Heart right ventricle (tissue), 16 donors: ENCODE measurements at regions of chr18 and their contacts with region 1.

Region 1: DNA sequence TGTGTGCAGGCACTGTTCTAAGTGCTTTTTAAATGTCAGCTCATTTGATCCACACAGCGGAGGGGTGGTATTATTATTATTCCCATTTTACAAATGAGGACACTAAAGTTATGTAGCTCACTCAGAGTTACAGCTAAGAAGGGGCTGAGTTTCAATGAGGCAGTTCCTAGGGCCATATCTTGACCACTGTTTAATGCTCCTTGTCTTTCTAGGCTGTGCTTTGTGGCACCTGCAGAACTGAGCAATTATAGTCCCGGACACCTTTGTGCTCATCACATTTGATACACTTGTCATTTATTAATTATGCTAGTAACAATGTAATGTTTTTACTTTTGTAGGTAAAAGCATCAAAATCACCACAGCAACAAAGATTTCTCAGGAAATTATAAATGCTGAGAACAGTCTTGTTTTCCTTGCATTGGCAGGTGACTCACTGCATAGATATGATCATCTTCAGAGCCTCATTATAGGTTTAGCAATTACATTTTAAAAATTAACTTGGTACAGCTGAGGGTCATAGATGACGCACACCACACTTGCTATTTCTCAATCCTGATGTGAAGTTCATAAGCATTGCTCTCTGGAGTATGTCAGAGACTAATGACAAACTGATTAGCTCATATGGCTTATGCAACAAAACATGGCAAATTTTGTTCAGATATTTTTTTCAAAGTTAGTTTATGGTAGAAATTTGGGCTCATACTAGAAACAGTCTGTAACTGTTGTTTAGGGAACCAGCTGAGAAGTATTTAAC is 366.8 kb downstream of the TGIF1 start:
- DNase-seq: no peak
- ATAC-seq: peak in 1 of 8 donors; percentile 81
- H3K4me3 ChIP-seq: no peak overlapping the region
- H3K27ac ChIP-seq: no peak overlapping the region
- H3K4me1 ChIP-seq: peaks cover 0 to 4% (median 0%) of the 10 kb centered on the region in 9 donors
- H3K27me3 ChIP-seq: no peaks in the 10 kb centered on the region
- CTCF ChIP-seq: no peak

Region 2: DNA sequence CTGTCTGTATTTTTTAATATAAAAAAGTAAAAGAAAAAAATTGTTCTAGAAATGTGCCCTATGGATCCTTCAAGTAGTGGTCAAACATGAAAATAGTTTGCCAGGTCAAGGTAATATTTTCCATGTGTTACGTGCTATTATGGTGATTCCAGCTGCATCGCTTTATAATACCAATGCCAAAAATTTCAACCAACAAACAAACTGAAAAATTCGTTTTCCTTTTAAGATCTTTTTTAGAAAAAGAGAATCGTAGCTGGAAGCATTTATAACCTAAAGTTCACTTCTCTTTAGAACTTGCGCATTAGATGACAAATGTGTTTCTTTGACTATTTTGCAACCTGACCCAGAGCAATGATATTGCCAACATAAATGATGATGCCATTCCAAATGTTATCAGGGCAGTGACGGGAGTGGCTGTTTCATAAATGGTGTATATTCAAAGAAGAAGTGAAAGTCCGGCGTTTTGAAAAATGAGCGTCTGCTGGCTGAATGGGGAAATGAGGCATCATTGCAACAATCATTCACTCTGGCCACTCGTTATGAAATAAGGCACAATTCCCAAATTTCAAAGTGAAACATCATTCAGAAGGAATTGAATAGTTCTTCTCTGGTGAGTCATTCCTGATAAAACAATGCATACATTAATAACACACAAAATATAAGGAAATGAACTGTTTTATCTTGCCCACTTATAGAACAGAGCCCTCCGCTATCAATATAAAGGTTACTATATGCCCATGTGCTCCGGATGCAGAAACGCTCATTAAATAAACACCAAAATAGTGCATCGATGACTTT is 69.4 kb before region 1 on chr18:
- intact Hi-C with region 1: loop called in 1 of 10 experiments (anchors 10 kb)
- DNase-seq: no peak
- ATAC-seq: peak in 4 of 8 donors; percentile 38 to 58 (median 48)
- H3K4me3 ChIP-seq: no peak overlapping the region
- H3K27ac ChIP-seq: peak overlapping the region in 1 of 10 donors; percentile 87
- H3K4me1 ChIP-seq: peaks cover 0 to 17% (median 0%) of the 10 kb centered on the region in 9 donors
- H3K27me3 ChIP-seq: no peaks in the 10 kb centered on the region
- CTCF ChIP-seq: no peak